ENCODE measurements at regions of chr4 and their contacts with region 1.

Region 1: GRCh38 chr4:7987148-7987989 is 47.7 kb upstream of the AFAP1 start:
- DNase-seq: peak; percentile 56 to 84 (median 76)
- ATAC-seq: peak; percentile 77
- H3K4me3 ChIP-seq: no peak overlapping the region
- H3K4me3 Mint-ChIP-seq: no peak overlapping the region
- H3K27ac ChIP-seq: no peak overlapping the region
- H3K27ac Mint-ChIP-seq: no peak overlapping the region
- H3K4me1 ChIP-seq: peaks cover 5% of the 10 kb centered on the region
- H3K4me1 Mint-ChIP-seq: peaks cover 6% of the 10 kb centered on the region
- H3K27me3 ChIP-seq: no peaks in the 10 kb centered on the region
- H3K27me3 Mint-ChIP-seq: peaks cover 2% of the 10 kb centered on the region
- CTCF ChIP-seq: peak; percentile 76

Region 2: GRCh38 chr4:7192252-7193029 is 794.9 kb before region 1 on chr4 and contains the start of gene SORCS2:
- CTCF ChIA-PET with region 1: no interaction called
- POLR2A ChIA-PET with region 1: no interaction called
- intact Hi-C with region 1: loop called (anchors 5 kb)
- DNase-seq: peak in 5 of 9 experiments; percentile 7 to 67 (median 26)
- ATAC-seq: peak; percentile 52
- H3K4me3 ChIP-seq: no peak within 1 kb of the TSS
- H3K4me3 Mint-ChIP-seq: peak within 1 kb of the TSS; percentile 58
- H3K27ac ChIP-seq: no peak within 1 kb of the TSS
- H3K27ac Mint-ChIP-seq: no peak within 1 kb of the TSS
- H3K4me1 ChIP-seq: peaks cover 5% of the 10 kb centered on the region
- H3K4me1 Mint-ChIP-seq: no peaks in the 10 kb centered on the region
- H3K27me3 ChIP-seq: peaks cover 9 to 10% of the 10 kb centered on the region in 2 experiments
- H3K27me3 Mint-ChIP-seq: peaks cover 59% of the 10 kb centered on the region
- CTCF ChIP-seq: no peak
- total RNA-seq, gene SORCS2: not detected

Region 3: GRCh38 chr4:8050555-8051206 is 63.3 kb after region 1 on chr4:
- CTCF ChIA-PET with region 1: no interaction called
- POLR2A ChIA-PET with region 1: no interaction called
- intact Hi-C with region 1: no loop called
- DNase-seq: no peak
- ATAC-seq: no peak
- H3K4me3 ChIP-seq: no peak overlapping the region
- H3K4me3 Mint-ChIP-seq: no peak overlapping the region
- H3K27ac ChIP-seq: no peak overlapping the region
- H3K27ac Mint-ChIP-seq: no peak overlapping the region
- H3K4me1 ChIP-seq: no peaks in the 10 kb centered on the region
- H3K4me1 Mint-ChIP-seq: peaks cover 2% of the 10 kb centered on the region
- H3K27me3 ChIP-seq: no peaks in the 10 kb centered on the region
- H3K27me3 Mint-ChIP-seq: no peaks in the 10 kb centered on the region
- CTCF ChIP-seq: no peak

Measured in CD8-positive, alpha-beta T cell (primary cell).